ENCODE measurements at regions of chr11 and their contacts with region 1.

Region 1: GRCh38 chr11:21401496-21401895 is 732.1 kb downstream of the NELL1 start:
- DNase-seq: no peak
- H3K4me3 ChIP-seq: no peak overlapping the region
- H3K27ac ChIP-seq: no peak overlapping the region
- H3K4me1 ChIP-seq: no peaks in the 10 kb centered on the region
- H3K27me3 ChIP-seq: no peaks in the 10 kb centered on the region
- CTCF ChIP-seq: no peak

Region 2: DNA sequence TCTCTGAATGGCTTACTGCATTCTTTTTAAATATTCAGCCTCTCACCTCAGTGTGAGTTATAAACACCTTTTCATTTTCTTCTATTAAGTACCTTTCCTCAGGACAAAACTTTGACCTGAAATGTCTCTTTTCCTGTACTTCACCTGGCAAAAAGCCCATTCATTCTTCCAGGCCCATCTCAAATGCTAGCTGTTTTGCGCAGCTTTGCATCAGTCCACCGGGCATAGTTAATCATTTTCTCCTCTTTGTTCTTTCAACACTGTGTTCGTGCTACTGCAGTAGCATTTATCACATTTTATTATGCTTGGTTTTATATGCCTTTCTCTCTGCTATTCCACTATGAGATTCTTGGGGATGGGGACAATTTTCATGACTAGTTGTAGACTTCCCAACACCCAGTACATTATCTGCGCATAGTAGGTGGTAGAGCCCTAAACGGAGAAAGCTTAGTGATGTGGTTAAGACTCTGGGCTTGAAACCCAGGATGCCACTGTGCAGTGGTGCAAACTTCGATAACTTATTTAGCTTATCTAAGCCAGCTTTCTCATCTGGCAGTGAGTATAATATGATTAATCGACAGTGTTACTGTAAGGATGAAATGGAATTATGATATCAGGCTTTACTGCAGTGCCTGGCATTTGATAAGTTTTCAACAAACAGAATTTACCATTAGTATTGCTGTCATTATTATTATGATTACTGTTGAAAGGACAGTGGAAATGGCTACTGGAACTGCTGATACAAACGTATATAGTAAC is 36.5 kb before region 1 on chr11:
- CTCF ChIA-PET with region 1: no interaction called
- POLR2A ChIA-PET with region 1: interaction called, 11 read pairs
- intact Hi-C with region 1: no loop called
- DNase-seq: no peak
- H3K4me3 ChIP-seq: no peak overlapping the region
- H3K27ac ChIP-seq: no peak overlapping the region
- H3K4me1 ChIP-seq: no peaks in the 10 kb centered on the region
- H3K27me3 ChIP-seq: 0 out of 2 replicates have a peak, but pooled peaks cover 5% of the 10 kb centered on the region
- CTCF ChIP-seq: no peak

Measured in PC-9 (cell line).